ENCODE measurements at regions of chr22 and their contacts with region 1.

Region 1: DNA sequence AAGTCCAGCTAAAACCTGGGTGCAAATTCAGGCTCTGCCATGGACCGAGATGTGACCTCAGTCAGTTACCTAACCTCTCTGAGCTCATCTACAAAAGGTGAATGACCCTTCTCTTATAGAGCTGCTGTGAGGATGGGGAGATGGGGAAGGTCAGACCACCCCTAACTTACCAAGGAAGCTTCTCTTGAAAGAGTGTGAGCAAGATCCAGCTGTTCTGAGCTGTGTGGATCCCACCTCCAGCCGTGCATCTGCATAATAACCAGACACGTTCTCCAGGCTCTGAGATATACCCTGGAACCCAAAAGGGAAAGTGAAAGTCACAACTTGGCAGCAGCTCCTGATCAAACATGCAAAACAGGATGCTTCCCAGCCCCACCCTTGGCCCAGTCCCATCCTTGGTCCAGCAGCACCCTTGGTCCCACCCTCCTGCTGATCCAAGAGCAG is at the start of gene APOL3:
- DNase-seq: no peak
- ATAC-seq: peak; percentile 45
- H3K4me3 Mint-ChIP-seq: peak within 1 kb of the TSS; percentile 85
- H3K27ac Mint-ChIP-seq: peak within 1 kb of the TSS; percentile 95
- H3K4me1 Mint-ChIP-seq: peaks cover 92% of the 10 kb centered on the region
- H3K27me3 Mint-ChIP-seq: no peaks in the 10 kb centered on the region
- CTCF ChIP-seq: no peak
- total RNA-seq, gene APOL3: 32.2 and 38.4 TPM in 2 replicates

Region 2: GRCh38 chr22:36180038-36180880 is 19.7 kb after region 1 on chr22:
- CTCF ChIA-PET with region 1: interaction called, 14 read pairs
- POLR2A ChIA-PET with region 1: interaction called, 6 read pairs
- intact Hi-C with region 1: loop called (anchors 1 kb)
- DNase-seq: peak; percentile 78
- ATAC-seq: peak; percentile 100
- H3K4me3 Mint-ChIP-seq: no peak overlapping the region
- H3K27ac Mint-ChIP-seq: no peak overlapping the region
- H3K4me1 Mint-ChIP-seq: peaks cover 3% of the 10 kb centered on the region
- H3K27me3 Mint-ChIP-seq: no peaks in the 10 kb centered on the region
- CTCF ChIP-seq: no peak

Measured in activated B cell treated with CpG ODN at 0.5 μM for 24 hours (primary cell).